RWPE1 (cell line): ENCODE measurements at regions of chr5 and their contacts with region 1.

Region 1: GRCh38 chr5:140547508-140548299 is at the start of gene EIF4EBP3:
- DNase-seq: peak; percentile 97
- H3K27ac ChIP-seq: peak within 1 kb of the TSS; percentile 86
- CTCF ChIP-seq: peak; percentile 63

Region 2: DNA sequence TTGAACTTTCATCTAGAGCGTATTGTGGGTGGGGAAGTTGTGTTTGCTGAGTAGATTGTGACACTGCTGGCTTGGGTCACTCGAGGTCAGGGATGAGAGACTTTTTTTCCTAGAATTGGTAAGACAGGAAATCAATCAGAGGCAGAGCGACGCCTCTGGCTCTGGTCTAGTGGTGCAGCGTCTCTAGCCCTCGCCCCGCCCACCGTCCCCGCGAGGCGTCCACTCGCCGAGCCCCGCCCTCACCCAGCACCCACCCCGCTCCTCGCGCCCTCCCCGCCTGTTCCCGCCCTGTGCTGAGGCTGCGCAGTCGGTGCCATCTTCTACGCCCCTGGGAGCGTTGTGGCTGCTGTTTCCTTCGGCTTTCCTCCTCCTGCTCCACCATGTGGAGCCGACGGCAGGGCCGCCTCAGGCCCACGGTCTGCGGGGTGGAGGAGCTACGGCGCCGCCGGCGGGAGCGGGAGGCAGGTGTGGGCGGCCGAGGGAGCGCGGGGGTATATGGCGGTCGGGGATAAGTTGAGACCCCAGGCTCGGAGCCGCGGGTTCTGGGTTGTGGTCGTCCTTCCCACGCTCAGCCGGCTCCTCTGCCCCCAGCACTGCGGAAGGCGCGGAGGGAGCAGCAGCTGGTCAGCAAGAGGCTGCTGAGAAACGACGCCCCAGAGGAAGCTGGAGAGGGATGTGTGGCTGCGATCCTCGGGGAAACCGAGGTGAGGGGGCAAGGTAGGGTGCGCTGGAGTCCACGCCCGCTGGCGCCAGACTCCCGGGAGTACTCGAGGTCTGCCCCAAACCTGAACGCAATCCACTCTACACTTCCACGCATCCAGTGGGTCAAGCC is 91.7 kb after region 1 on chr5 and contains the start of gene TMCO6:
- CTCF ChIA-PET with region 1: interaction called, 21 read pairs
- POLR2A ChIA-PET with region 1: no interaction called
- DNase-seq: peak; percentile 99
- H3K27ac ChIP-seq: peak within 1 kb of the TSS; percentile 81
- CTCF ChIP-seq: peak; percentile 90